CD4-positive, alpha-beta T cell (primary cell): ENCODE measurements at regions of chr17 and their contacts with region 1.

Region 1: GRCh38 chr17:8248751-8249607 is at the start of gene PFAS:
- DNase-seq: peak; percentile 87 to 98 (median 94)
- ATAC-seq: peak; percentile 35
- H3K4me3 ChIP-seq: peak within 1 kb of the TSS; percentile 75
- H3K4me3 Mint-ChIP-seq: peak within 1 kb of the TSS; percentile 98
- H3K27ac ChIP-seq: peak within 1 kb of the TSS; percentile 99 to 100
- H3K27ac Mint-ChIP-seq: peak within 1 kb of the TSS; percentile 100
- H3K4me1 ChIP-seq: peaks cover 53% of the 10 kb centered on the region
- H3K4me1 Mint-ChIP-seq: peaks cover 62% of the 10 kb centered on the region
- H3K27me3 ChIP-seq: no peaks in the 10 kb centered on the region
- H3K27me3 Mint-ChIP-seq: peaks cover 5% of the 10 kb centered on the region
- CTCF ChIP-seq: no peak
- total RNA-seq, gene PFAS: 22.3 to 23.0 TPM

Region 2: GRCh38 chr17:8118769-8119580 is 130.0 kb before region 1 on chr17:
- CTCF ChIA-PET with region 1: interaction called, 6 read pairs
- POLR2A ChIA-PET with region 1: interaction called, 58 read pairs
- intact Hi-C with region 1: loop called (anchors 1 to 5 kb)
- DNase-seq: peak; percentile 75 to 92 (median 81)
- ATAC-seq: peak; percentile 60
- H3K4me3 ChIP-seq: peak overlapping the region; percentile 57
- H3K4me3 Mint-ChIP-seq: peak overlapping the region; percentile 99
- H3K27ac ChIP-seq: peak overlapping the region; percentile 7 to 50
- H3K27ac Mint-ChIP-seq: peak overlapping the region; percentile 100
- H3K4me1 ChIP-seq: peaks cover 65% of the 10 kb centered on the region
- H3K4me1 Mint-ChIP-seq: peaks cover 53% of the 10 kb centered on the region
- H3K27me3 ChIP-seq: peaks cover 45 to 53% of the 10 kb centered on the region in 2 experiments
- H3K27me3 Mint-ChIP-seq: peaks cover 66% of the 10 kb centered on the region
- CTCF ChIP-seq: peak; percentile 81

Region 3: DNA sequence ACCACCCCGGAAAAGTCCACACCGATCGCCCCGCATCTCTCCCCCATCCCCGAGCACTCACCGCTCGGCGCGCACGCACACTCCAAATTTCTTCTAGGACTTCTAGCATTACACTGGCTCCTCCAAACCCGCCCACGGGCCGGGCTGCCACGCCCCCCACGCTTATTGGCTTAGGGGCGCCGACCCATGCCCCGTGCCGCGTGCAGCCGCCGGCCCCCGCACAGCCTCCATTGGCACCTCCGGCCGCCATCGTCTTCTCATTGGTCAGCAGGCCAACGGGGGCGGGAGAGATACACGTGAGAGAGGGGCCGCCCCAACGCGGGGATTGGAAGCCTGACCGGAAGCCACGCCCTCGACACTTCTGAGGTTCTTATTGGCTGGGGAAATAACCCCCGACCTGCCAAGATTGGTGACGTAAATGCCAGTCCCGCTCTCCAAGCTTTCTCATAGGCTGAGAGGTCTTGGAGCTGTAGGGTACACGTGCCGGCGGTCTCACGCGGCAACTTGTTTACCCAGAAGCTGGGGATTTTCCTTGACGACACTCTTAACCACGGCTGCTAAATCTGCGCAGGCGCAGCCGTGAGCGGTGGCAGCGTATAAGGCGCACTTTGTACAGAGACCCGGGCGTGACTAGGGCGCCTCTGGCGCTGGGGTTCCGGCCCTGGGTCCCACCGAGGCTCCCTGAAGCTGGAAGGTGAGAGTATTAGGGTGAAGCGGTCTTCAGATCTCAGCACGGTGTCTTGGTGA is 92.6 kb before region 1 on chr17:
- CTCF ChIA-PET with region 1: no interaction called
- POLR2A ChIA-PET with region 1: interaction called, 63 read pairs
- intact Hi-C with region 1: loop called in 1 of 2 experiments (anchors 5 kb)
- DNase-seq: peak; percentile 99 to 100 (median 100)
- ATAC-seq: peak; percentile 70
- H3K4me3 ChIP-seq: peak overlapping the region; percentile 86
- H3K4me3 Mint-ChIP-seq: no peak overlapping the region
- H3K27ac ChIP-seq: peak overlapping the region; percentile 99 to 100
- H3K27ac Mint-ChIP-seq: no peak overlapping the region
- H3K4me1 ChIP-seq: peaks cover 88% of the 10 kb centered on the region
- H3K4me1 Mint-ChIP-seq: peaks cover 73% of the 10 kb centered on the region
- H3K27me3 ChIP-seq: no peaks in the 10 kb centered on the region
- H3K27me3 Mint-ChIP-seq: peaks cover 3% of the 10 kb centered on the region
- CTCF ChIP-seq: no peak

Region 4: DNA sequence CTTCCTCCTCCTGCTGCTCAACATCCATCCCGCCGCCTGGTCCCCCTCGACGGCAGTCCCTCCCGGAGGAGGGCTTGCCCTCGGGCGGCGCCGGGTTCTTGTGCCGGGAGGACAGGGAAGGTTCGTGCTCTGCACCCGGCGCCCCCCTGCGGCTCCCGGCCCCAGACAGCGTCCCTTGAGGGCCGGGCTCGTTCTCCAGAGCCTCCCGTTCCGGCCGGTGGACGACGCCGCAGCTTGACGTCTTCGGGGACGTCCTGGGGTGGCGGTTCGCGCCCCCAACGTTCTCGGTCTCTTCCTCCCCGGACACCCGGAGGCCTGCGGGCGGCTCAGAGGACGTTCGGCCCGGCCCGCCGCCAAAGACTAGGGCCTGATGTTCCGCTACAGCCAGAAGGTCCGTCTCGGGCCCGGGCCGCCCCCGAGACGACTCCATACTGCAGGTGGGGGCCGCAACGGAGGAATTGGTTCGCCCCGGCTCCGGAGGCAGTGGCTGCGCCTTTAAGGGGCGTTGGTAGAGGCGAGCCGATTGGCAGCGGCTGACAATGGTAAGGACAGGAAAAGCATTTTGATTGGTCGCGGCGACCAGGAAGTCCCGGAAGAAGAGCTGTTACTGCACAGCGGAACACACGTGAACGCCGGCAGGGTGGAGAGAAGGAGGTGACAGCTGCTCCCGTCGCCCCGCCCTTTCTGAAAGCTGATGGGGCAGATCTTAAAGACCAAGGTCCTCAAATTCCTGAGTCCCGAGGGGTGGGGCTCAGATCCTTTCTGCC is 59.1 kb before region 1 on chr17 and contains the start of gene BORCS6:
- CTCF ChIA-PET with region 1: interaction called, 3 read pairs
- POLR2A ChIA-PET with region 1: interaction called, 147 read pairs
- intact Hi-C with region 1: loop called in 1 of 2 experiments (anchors 2 kb)
- DNase-seq: peak; percentile 84 to 99 (median 92)
- ATAC-seq: peak; percentile 68
- H3K4me3 ChIP-seq: peak within 1 kb of the TSS; percentile 93
- H3K4me3 Mint-ChIP-seq: no peak within 1 kb of the TSS
- H3K27ac ChIP-seq: peak within 1 kb of the TSS; percentile 83
- H3K27ac Mint-ChIP-seq: peak within 1 kb of the TSS; percentile 85
- H3K4me1 ChIP-seq: peaks cover 77% of the 10 kb centered on the region
- H3K4me1 Mint-ChIP-seq: peaks cover 12% of the 10 kb centered on the region
- H3K27me3 ChIP-seq: no peaks in the 10 kb centered on the region
- H3K27me3 Mint-ChIP-seq: no peaks in the 10 kb centered on the region
- CTCF ChIP-seq: no peak
- total RNA-seq, gene BORCS6: 6.1 to 6.4 TPM

Region 5: DNA sequence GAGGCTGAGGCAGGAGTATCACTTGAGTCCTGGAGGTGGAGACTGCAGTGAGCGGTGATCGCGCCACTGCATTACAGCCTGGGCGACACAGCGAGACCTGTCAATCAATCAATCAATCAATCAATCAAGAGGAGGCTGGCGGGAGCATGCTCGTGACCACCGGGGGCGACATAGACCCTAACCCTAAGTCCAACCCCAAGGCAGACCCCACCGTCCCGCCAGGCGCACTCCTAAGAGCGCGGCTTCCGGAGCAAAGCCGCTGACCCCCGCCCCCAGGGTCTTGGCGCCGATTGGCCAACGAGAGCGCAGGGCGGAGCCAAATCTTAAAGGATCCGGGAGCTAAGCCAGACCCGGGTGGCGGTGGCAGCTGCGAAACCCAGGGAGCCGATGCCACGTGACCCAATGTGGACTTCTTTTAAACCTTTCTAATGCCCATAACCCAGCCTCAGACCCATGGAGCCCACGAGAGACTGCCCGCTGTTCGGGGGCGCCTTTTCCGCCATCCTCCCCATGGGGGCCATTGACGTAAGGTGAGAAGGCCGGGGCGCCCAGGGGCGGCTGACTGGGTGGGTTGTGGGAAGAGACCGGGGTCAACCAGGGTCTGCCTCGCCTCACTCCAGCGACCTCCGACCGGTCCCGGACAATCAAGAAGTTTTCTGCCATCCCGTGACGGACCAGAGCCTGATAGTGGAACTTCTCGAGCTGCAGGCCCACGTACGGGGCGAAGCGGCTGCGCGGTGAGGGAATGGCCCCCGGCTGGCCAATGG is 39.5 kb after region 1 on chr17 and contains the start of gene RANGRF:
- CTCF ChIA-PET with region 1: interaction called, 4 read pairs
- POLR2A ChIA-PET with region 1: interaction called, 51 read pairs
- intact Hi-C with region 1: loop called in 1 of 2 experiments (anchors 1 kb)
- DNase-seq: peak; percentile 60 to 89 (median 75)
- ATAC-seq: peak; percentile 96
- H3K4me3 ChIP-seq: peak within 1 kb of the TSS; percentile 98
- H3K4me3 Mint-ChIP-seq: peak within 1 kb of the TSS; percentile 98
- H3K27ac ChIP-seq: peak within 1 kb of the TSS; percentile 76 to 94
- H3K27ac Mint-ChIP-seq: peak within 1 kb of the TSS; percentile 95
- H3K4me1 ChIP-seq: peaks cover 45% of the 10 kb centered on the region
- H3K4me1 Mint-ChIP-seq: peaks cover 50% of the 10 kb centered on the region
- H3K27me3 ChIP-seq: no peaks in the 10 kb centered on the region
- H3K27me3 Mint-ChIP-seq: no peaks in the 10 kb centered on the region
- CTCF ChIP-seq: no peak
- total RNA-seq, gene RANGRF: 23.1 to 24.6 TPM